PC-3 (cell line): ENCODE measurements at regions of chr6 and their contacts with region 1.

Region 1: DNA sequence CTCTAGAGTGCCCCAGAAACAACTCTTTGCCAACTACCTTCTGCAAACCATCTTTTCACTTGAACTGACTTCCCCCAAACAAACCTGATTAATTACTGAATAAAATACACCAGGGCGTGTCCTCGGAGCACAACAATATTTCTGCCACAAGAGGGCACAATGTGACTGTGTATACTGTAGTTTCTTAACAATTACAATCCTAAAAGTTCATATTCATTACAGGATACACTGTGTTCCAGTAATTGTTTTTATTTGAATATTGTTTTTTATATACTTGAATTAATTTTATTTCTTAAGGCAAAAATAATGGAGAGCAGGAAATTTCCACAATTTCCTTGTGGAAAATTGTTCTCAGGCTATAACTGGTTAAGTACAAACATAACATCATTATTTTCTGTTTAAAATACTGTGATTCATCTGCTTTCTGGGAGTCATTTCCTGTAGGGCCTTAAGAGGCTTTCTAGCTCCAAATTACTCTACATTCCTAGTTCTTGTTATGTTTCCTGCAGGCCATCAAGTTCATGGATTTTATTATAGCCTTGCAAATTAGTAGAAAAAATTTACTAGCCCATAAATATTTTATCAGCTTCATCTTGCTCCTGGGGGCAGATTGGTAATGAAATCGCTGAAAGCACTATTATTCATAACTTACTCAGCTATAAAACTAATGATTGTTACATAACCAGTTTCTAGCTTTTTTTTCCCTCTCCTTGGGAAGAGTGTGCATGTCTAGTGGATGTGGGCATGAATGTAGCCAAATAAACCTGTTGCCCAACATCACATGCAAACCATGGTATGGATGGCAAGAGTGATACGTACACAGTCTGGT is 51.9 kb upstream of the SLC22A16 start:
- DNase-seq: peak; percentile 95
- ATAC-seq: peak; percentile 68
- H3K4me3 ChIP-seq: peak overlapping the region; percentile 10; the same call in 1 of the 2 replicates
- H3K27ac ChIP-seq: peak overlapping the region; percentile 90
- H3K4me1 ChIP-seq: peaks cover 43% of the 10 kb centered on the region
- H3K27me3 ChIP-seq: no peaks in the 10 kb centered on the region
- CTCF ChIP-seq: peak; percentile 80

Region 2: DNA sequence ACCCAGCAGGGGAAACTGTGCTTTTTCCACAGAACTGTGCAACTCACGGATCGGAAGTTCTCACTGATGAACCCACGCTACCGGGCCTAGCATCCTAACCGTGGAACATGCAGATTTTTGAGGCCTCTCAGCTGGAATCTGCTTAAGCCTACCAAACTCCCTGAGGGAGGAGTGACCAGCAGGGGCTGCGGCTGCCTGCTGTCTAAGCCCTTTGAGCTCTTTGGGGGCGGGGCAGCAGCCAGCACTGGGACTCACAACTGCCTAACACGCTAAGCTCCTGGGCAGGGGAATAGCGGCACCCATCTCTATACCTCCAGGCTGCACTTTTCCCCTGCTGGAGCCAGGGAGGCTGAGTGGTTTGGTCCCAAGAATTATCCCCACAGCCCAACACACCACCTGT is 149.8 kb before region 1 on chr6:
- CTCF ChIA-PET with region 1: no interaction called
- POLR2A ChIA-PET with region 1: no interaction called
- intact Hi-C with region 1: no loop called
- DNase-seq: no peak
- ATAC-seq: no peak
- H3K4me3 ChIP-seq: no peak overlapping the region
- H3K27ac ChIP-seq: no peak overlapping the region
- H3K4me1 ChIP-seq: no peaks in the 10 kb centered on the region
- H3K27me3 ChIP-seq: peaks cover 8% of the 10 kb centered on the region; the same call in 1 of the 2 replicates
- CTCF ChIP-seq: no peak

Region 3: DNA sequence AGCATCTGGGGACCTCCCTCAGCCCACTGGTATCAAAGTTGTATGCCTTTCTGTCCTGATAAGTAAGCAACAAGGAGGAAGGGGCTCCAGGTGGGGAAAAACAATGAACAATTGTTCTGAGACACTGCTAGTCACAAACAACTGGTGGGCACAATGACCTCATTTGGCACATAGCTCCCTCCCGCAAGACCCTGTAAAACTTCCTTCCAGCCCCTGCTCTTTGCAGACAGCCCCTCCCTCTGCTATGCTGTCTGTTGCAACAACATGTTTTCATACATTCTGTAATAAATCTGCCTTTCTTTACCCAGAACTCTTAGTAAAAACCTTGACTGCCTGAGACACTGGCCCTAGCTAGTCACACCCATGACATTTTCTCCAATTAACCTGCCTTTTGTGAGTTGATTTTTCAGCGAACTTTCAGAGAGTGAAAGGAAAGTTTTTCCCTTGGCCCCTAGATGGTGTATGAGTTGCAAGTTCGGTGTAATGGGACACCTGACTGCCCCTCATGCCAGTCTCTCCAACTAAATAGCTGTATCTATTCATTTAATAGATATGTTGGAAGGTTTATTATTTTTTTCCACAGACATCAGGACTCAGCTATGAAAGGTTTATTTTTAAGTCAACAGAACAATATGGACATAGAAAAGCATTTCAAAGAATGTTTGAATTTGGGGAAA is 90.4 kb after region 1 on chr6:
- CTCF ChIA-PET with region 1: interaction called, 3 read pairs
- POLR2A ChIA-PET with region 1: no interaction called
- intact Hi-C with region 1: loop called (anchors 1 kb)
- DNase-seq: peak; percentile 57
- ATAC-seq: peak; percentile 89
- H3K4me3 ChIP-seq: no peak overlapping the region
- H3K27ac ChIP-seq: peak overlapping the region; percentile 58
- H3K4me1 ChIP-seq: peaks cover 22% of the 10 kb centered on the region
- H3K27me3 ChIP-seq: no peaks in the 10 kb centered on the region
- CTCF ChIP-seq: peak; percentile 67

Region 4: DNA sequence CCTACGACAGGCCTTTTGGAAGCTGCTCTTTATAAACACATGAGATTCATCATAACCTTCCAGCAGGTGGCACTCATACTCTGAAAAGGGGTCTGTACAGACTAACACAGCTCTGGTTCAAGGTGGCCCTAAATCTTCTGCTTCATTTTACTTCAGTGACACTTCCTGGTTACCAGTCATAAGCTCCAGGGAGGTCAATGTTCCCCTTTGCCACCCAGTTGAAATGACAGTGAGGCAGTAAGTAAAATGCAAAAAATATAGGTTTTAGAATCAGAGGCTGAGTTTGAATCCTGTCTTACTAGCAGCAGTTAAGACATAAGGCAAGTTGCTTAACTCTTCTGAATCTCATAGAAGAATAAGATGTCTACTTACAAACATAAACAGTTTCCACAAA is 154.1 kb after region 1 on chr6:
- CTCF ChIA-PET with region 1: interaction called, 5 read pairs
- POLR2A ChIA-PET with region 1: interaction called, 3 read pairs
- intact Hi-C with region 1: loop called (anchors 1 kb)
- DNase-seq: peak; percentile 78
- ATAC-seq: peak; percentile 88
- H3K4me3 ChIP-seq: peak overlapping the region; percentile 28; the same call in 1 of the 2 replicates
- H3K27ac ChIP-seq: peak overlapping the region; percentile 80
- H3K4me1 ChIP-seq: peaks cover 17% of the 10 kb centered on the region
- H3K27me3 ChIP-seq: no peaks in the 10 kb centered on the region
- CTCF ChIP-seq: peak; percentile 84

Region 5: DNA sequence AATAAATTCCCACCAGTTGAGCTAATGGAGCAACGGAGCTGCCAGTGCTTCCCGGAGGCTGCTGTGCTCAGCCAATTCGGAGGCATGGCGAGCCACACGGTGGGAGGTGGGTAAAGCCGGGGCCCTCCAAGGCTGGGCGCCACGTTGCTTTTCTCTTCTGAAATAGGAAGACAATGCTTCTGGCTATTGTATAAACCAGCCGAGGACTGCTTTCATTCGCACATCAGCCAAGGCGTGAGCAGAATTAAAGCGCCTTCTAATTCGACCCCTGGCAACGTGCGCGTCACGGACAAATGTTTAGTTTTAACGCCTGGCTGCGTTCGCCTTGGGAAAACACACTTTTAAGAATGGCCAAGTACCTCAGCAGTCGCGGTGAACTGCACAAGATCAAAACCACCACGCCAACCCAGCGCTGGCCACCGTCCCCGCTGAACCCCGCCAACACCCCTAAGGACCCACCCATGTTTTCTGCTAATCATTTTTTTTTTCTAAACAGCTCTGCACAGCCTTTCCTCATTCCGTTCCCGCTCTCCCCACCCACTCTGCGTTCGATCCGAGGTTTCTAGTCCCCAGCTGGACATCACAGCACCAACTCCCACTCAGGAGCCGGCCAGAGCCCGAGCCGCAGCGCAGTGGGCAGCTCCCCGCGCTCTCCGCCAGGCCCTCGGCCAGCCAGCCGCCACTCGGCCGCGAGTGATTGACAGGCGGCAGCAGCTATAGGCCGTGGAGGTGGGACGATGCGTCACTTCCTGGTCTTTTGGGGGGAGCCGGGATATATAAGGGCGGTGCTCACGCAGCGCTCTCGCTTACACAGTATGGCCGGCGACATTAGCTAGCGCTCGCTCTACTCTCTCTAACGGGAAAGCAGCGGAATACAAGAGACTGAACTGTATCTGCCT is 345.9 kb after region 1 on chr6 and contains the start of gene AMD1:
- CTCF ChIA-PET with region 1: interaction called, 4 read pairs
- POLR2A ChIA-PET with region 1: interaction called, 8 read pairs
- intact Hi-C with region 1: loop called (anchors 1 kb)
- DNase-seq: peak; percentile 92
- ATAC-seq: peak; percentile 81
- H3K4me3 ChIP-seq: peak within 1 kb of the TSS; percentile 96
- H3K27ac ChIP-seq: peak within 1 kb of the TSS; percentile 60
- H3K4me1 ChIP-seq: peaks cover 7% of the 10 kb centered on the region
- H3K27me3 ChIP-seq: no peaks in the 10 kb centered on the region
- CTCF ChIP-seq: no peak
- total RNA-seq, gene AMD1: 56.2 and 72.5 TPM in 2 replicates

Region 6: GRCh38 chr6:110999634-111000270 is 471.4 kb after region 1 on chr6:
- CTCF ChIA-PET with region 1: interaction called, 5 read pairs
- POLR2A ChIA-PET with region 1: no interaction called
- intact Hi-C with region 1: loop called (anchors 1 kb)
- DNase-seq: peak; percentile 61
- ATAC-seq: peak; percentile 50; the same call in 1 of the 2 replicates
- H3K4me3 ChIP-seq: no peak overlapping the region
- H3K27ac ChIP-seq: no peak overlapping the region
- H3K4me1 ChIP-seq: no peaks in the 10 kb centered on the region
- H3K27me3 ChIP-seq: no peaks in the 10 kb centered on the region
- CTCF ChIP-seq: peak; percentile 63

Region 7: GRCh38 chr6:111591104-111591900 is 1063.0 kb after region 1 on chr6:
- CTCF ChIA-PET with region 1: no interaction called
- POLR2A ChIA-PET with region 1: no interaction called
- intact Hi-C with region 1: no loop called
- DNase-seq: peak; percentile 98
- ATAC-seq: peak; percentile 75
- H3K4me3 ChIP-seq: peak overlapping the region; percentile 45
- H3K27ac ChIP-seq: peak overlapping the region; percentile 93
- H3K4me1 ChIP-seq: peaks cover 59% of the 10 kb centered on the region
- H3K27me3 ChIP-seq: no peaks in the 10 kb centered on the region
- CTCF ChIP-seq: no peak